ENCODE measurements at regions of chr2 and their contacts with region 1.

Region 1: DNA sequence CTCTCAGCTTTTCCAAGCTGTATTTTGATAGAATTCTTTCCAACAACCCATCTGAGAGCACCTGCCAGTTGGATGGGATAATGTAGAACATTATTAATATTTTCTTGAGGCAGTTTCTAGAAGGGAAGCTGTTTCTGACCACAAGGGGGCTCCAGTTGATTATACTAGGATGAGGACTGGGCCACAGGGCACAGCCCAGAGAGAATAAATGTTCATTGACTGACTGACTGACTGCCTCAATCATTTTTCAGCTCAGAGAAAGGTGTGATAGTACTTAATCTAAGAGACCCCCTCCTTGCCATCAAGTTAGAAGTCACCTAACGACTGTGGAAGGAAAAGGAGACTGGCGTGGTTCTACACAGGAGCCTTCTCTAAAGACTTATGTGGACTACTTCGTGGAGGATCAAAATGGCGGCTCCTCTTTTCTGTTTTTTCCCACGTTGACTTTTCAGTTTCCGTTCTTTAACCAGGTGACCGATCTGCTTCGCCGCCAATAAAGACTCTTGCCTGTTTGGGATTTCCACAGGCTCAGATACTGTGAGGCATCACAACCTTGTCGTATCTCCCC is 31.9 kb upstream of the CREG2 start:
- DNase-seq: peak in 34 of 35 experiments; percentile 11 to 82 (median 46)
- ATAC-seq: peak; percentile 53 to 78 (median 66)
- H3K4me3 ChIP-seq: no peak overlapping the region
- H3K4me3 Mint-ChIP-seq: no peak overlapping the region
- H3K27ac ChIP-seq: no peak overlapping the region
- H3K27ac Mint-ChIP-seq: no peak overlapping the region
- H3K4me1 ChIP-seq: no peaks in the 10 kb centered on the region
- H3K4me1 Mint-ChIP-seq: no peaks in the 10 kb centered on the region
- H3K27me3 ChIP-seq: peaks cover 0 to 8% of the 10 kb centered on the region in 2 experiments
- H3K27me3 Mint-ChIP-seq: no peaks in the 10 kb centered on the region

Region 2: DNA sequence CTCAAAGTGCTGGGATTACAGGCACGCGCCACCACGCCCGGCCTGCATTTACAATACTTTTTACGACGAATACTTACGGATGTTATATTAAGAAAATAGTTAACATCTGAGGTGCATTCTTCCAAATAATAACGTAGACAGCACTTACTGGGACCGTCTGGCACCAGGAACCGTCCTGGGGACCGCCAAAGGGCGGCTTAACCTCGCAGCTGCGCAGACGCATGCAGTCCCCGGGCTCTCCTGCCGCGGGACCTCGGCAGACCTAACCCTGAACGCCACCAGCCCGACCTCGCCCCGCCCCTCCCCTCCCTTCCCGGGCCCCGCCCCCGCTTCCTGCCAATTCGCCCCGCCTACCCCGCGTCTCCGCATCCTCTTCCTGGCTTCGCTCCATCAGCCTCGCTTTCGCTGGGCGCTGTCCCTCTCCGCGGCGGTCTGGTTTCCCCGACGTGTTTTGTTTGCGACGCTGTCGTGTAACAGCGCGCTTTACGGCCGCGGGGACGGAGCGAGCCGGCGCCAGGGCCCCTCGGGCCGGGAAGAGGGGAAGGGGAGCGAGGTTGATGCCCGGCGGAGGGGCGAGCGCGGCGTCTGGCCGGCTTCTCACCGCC is 166.7 kb before region 1 on chr2 and contains the start of gene CNOT11:
- CTCF ChIA-PET with region 1: no interaction called
- POLR2A ChIA-PET with region 1: interaction called in 1 of 2 experiments, 11 read pairs
- DNase-seq: peak; percentile 96 to 100 (median 99)
- ATAC-seq: peak; percentile 79 to 83 (median 80)
- H3K4me3 ChIP-seq: peak within 1 kb of the TSS; percentile 71 to 72
- H3K4me3 Mint-ChIP-seq: peak within 1 kb of the TSS; percentile 92 to 98 (median 97)
- H3K27ac ChIP-seq: peak within 1 kb of the TSS; percentile 91
- H3K27ac Mint-ChIP-seq: peak within 1 kb of the TSS; percentile 93 to 96
- H3K4me1 ChIP-seq: peaks cover 26 to 47% of the 10 kb centered on the region in 2 experiments
- H3K4me1 Mint-ChIP-seq: peaks cover 38 to 49% (median 49%) of the 10 kb centered on the region in 3 donors
- H3K27me3 ChIP-seq: no peaks in the 10 kb centered on the region
- H3K27me3 Mint-ChIP-seq: no peaks in the 10 kb centered on the region
- total RNA-seq, gene CNOT11: 45.8 to 52.5 (median 50.7) TPM

Region 3: GRCh38 chr2:101725515-101726192 is 306.5 kb after region 1 on chr2:
- CTCF ChIA-PET with region 1: interaction called in 1 of 2 experiments, 12 read pairs
- POLR2A ChIA-PET with region 1: no interaction called
- DNase-seq: peak in 14 of 35 experiments; percentile 17 to 65 (median 30)
- ATAC-seq: no peak
- H3K4me3 ChIP-seq: no peak overlapping the region
- H3K4me3 Mint-ChIP-seq: peak overlapping the region in 1 of 3 donors; percentile 23
- H3K27ac ChIP-seq: no peak overlapping the region
- H3K27ac Mint-ChIP-seq: peak overlapping the region; percentile 4 to 55
- H3K4me1 ChIP-seq: peaks cover 44 to 74% of the 10 kb centered on the region in 2 experiments
- H3K4me1 Mint-ChIP-seq: peaks cover 97 to 100% (median 97%) of the 10 kb centered on the region in 3 donors
- H3K27me3 ChIP-seq: no peaks in the 10 kb centered on the region
- H3K27me3 Mint-ChIP-seq: no peaks in the 10 kb centered on the region

Region 4: DNA sequence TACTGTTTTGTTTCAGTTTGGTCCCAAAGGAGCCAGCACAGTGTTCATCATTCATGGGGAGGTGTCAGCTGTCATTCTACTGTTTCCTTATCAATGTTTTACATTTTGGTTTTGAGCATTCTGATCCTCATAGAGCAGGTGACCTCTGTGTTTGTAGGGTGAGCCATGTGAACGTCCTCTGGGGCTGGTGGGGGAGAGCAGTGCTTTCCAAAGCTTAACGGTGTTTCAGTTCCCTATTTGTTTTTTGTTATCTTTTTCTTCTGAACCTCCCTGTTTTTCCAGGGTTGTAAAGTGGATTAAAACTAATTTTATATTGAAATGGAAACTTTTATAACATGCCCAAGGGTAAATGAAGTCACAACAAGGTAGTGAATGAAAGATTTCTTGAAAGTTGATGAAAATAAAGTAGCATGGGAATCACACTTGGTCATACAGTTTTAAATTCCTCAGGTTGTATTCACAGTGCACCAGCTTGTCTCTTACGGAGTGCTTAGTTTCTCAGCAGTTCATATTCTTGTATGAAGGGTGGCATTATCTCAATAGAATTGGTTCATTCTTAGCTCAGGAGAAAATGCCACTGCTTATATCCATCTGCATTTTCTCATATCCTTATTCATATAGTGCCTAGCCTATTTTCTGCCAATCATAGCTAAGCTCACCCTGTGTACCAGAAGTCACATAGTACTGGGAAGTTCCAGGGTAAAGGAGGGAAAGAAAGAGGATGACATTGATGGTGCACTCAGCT is 332.9 kb after region 1 on chr2:
- CTCF ChIA-PET with region 1: interaction called in 1 of 2 experiments, 3 read pairs
- POLR2A ChIA-PET with region 1: interaction called in 1 of 2 experiments, 10 read pairs
- DNase-seq: no peak
- ATAC-seq: peak in 1 of 4 experiments; percentile 34
- H3K4me3 ChIP-seq: no peak overlapping the region
- H3K4me3 Mint-ChIP-seq: peak overlapping the region in 1 of 3 donors; percentile 45
- H3K27ac ChIP-seq: no peak overlapping the region
- H3K27ac Mint-ChIP-seq: peak overlapping the region; percentile 24 to 35
- H3K4me1 ChIP-seq: peaks cover 33 to 34% of the 10 kb centered on the region in 2 experiments
- H3K4me1 Mint-ChIP-seq: peaks cover 79% of the 10 kb centered on the region in 3 donors
- H3K27me3 ChIP-seq: no peaks in the 10 kb centered on the region
- H3K27me3 Mint-ChIP-seq: no peaks in the 10 kb centered on the region

Region 5: GRCh38 chr2:101823347-101823791 is 404.2 kb after region 1 on chr2:
- CTCF ChIA-PET with region 1: interaction called, 11 to 26 read pairs
- POLR2A ChIA-PET with region 1: no interaction called
- DNase-seq: peak; percentile 40 to 84 (median 66)
- ATAC-seq: peak; percentile 80 to 90 (median 86)
- H3K4me3 ChIP-seq: no peak overlapping the region
- H3K4me3 Mint-ChIP-seq: peak overlapping the region; percentile 19 to 52 (median 47)
- H3K27ac ChIP-seq: peak overlapping the region; percentile 40
- H3K27ac Mint-ChIP-seq: peak overlapping the region; percentile 88 to 89
- H3K4me1 ChIP-seq: peaks cover 28 to 45% of the 10 kb centered on the region in 2 experiments
- H3K4me1 Mint-ChIP-seq: peaks cover 77 to 80% (median 77%) of the 10 kb centered on the region in 3 donors
- H3K27me3 ChIP-seq: no peaks in the 10 kb centered on the region
- H3K27me3 Mint-ChIP-seq: no peaks in the 10 kb centered on the region

Region 6: DNA sequence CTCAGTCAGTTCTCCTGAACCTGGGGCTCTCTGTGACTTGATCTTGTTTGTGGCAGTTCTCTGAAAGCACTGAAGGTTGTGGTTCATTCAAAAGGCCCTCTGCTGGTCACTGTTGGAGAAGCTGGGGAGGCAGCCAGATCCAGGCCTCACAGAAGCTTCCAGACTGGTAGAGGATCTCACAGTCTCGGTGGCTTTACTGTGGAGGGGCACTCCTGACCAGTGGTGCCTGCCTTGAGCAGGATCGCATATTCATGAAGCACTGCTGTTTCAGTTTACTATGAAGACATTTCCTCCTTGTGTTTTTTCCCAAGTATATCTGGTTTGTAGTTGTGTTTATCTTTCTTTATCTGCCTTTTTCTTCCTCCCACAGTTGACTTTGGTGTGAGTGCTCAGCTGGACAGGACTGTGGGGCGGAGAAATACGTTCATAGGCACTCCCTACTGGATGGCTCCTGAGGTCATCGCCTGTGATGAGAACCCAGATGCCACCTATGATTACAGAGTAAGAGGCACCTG is 412.2 kb after region 1 on chr2:
- CTCF ChIA-PET with region 1: interaction called, 15 to 42 read pairs
- POLR2A ChIA-PET with region 1: no interaction called
- DNase-seq: peak; percentile 12 to 76 (median 53)
- ATAC-seq: peak; percentile 49 to 72 (median 62)
- H3K4me3 ChIP-seq: no peak overlapping the region
- H3K4me3 Mint-ChIP-seq: peak overlapping the region in 2 of 3 donors; percentile 19 to 35
- H3K27ac ChIP-seq: no peak overlapping the region
- H3K27ac Mint-ChIP-seq: peak overlapping the region; percentile 76 to 86
- H3K4me1 ChIP-seq: peaks cover 33 to 43% of the 10 kb centered on the region in 2 experiments
- H3K4me1 Mint-ChIP-seq: peaks cover 51 to 54% (median 52%) of the 10 kb centered on the region in 3 donors
- H3K27me3 ChIP-seq: no peaks in the 10 kb centered on the region
- H3K27me3 Mint-ChIP-seq: no peaks in the 10 kb centered on the region

Measured in T-cell (primary cell).